Right ventricle myocardium inferior (tissue), 1 donor: ENCODE measurements at regions of chr2 and their contacts with region 1.

Region 1: GRCh38 chr2:190468814-190469569 is 60.8 kb downstream of the MFSD6 start:
- DNase-seq: peak; percentile 74
- ATAC-seq: peak; percentile 77

Region 2: GRCh38 chr2:190180313-190181122 is 288.5 kb before region 1 on chr2:
- intact Hi-C with region 1: loop called (anchors 5 kb)
- DNase-seq: peak; percentile 82
- ATAC-seq: peak; percentile 89

Region 3: GRCh38 chr2:190408538-190409271 is 60.3 kb before region 1 on chr2:
- intact Hi-C with region 1: loop called (anchors 5 kb)
- DNase-seq: peak; percentile 78
- ATAC-seq: peak; percentile 55

Region 4: GRCh38 chr2:190432567-190433231 is 36.3 kb before region 1 on chr2:
- intact Hi-C with region 1: no loop called
- DNase-seq: no peak
- ATAC-seq: no peak

Region 5: DNA sequence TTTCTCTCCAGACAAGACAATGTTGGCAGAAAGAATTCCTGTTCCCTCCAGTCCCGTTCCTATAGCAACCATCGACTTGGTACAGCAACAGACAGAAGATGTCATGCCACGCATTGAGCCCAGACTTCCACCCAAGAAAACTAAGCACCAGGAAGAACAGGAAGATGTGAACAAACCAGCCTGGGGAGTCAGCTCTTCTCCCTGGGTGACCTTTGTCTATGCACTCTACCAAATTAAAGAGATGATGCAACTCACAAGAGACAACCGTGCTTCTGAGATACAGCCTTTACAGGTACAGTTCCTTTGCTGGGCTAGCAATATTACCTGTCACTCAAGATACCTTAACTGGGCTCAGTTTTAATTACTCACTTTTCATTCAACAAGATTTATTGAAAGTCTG is 28.4 kb after region 1 on chr2:
- intact Hi-C with region 1: no loop called
- DNase-seq: no peak
- ATAC-seq: no peak

Region 6: DNA sequence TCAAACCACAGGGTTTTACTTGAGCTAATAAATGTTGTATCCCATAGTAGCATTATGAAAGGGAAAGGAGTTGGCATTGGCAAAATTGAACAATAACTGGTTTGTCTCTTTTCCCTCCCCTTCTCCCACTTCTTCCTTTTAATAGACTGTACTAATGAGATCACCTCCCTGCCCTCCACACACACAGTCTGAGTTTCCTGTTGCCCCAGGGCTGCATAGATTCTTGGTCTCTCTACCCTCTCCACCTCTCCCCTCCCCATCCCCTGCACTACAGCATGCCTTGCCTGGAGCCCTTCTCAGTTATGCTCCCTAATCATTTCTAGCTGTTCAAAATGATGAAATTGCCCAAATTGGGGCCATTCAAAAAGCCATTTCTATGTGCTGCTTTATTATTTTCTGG is 102.7 kb after region 1 on chr2:
- intact Hi-C with region 1: no loop called
- DNase-seq: no peak
- ATAC-seq: no peak

Region 7: DNA sequence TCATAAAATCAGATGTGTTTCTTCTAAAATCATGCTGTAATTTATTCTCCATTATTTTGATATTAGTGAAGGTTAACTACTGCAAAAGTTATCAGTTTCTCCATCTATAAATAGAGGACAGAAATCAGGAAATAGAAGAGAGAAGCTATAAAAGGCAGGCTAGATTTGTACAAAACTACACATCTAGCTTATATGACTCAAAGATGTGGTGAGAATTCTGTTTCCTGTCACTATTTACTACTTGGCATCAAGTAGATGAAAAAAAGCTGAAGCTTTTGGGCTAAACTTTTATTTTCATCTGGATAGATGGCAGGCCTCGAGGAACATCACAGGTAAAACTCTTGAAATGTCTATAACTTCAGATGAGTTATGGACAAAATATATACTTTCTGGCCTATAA is 130.1 kb after region 1 on chr2:
- intact Hi-C with region 1: no loop called
- DNase-seq: no peak
- ATAC-seq: no peak